CD8-positive, alpha-beta T cell (primary cell): ENCODE measurements at regions of chr19 and their contacts with region 1.

Region 1: DNA sequence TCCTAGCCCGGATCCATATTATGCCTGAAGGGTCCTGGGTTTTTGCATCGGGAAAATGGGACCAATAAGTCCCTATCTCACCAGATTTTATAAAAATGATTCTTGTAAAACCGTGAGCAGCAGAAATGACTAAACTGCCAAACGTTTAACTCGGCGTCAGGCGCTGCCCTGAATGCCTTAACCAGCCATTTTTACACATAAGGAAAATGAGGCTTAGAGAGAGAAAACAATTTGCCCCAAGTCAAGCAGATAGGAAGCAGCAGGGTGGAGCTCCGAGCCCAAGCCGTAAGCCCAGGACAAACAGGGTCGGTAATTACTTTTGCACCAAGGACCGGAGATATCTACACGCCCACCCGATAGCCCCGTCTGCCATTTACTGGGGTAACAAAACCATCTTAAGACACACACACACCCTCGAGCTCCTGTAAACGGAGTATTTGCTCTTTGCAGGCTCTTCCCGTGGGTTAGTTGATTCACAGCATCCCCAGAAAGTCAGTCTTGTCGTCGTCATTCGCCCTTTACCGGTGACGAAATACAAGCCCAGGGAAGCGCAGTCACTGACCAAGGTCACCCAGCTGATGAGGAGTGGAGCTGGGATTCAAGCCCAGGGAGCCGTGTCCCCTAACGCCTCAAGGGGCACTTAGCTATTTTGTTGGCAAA is 16.0 kb upstream of the MRI1 start:
- DNase-seq: peak in 2 of 9 experiments; percentile 23 to 55
- ATAC-seq: peak; percentile 8
- H3K4me3 ChIP-seq: peak overlapping the region; percentile 85 to 97
- H3K4me3 Mint-ChIP-seq: peak overlapping the region; percentile 90
- H3K27ac ChIP-seq: peak overlapping the region; percentile 96 to 98
- H3K27ac Mint-ChIP-seq: peak overlapping the region; percentile 92
- H3K4me1 ChIP-seq: peaks cover 22% of the 10 kb centered on the region
- H3K4me1 Mint-ChIP-seq: peaks cover 23% of the 10 kb centered on the region
- H3K27me3 ChIP-seq: no peaks in the 10 kb centered on the region
- H3K27me3 Mint-ChIP-seq: no peaks in the 10 kb centered on the region
- CTCF ChIP-seq: no peak

Region 2: DNA sequence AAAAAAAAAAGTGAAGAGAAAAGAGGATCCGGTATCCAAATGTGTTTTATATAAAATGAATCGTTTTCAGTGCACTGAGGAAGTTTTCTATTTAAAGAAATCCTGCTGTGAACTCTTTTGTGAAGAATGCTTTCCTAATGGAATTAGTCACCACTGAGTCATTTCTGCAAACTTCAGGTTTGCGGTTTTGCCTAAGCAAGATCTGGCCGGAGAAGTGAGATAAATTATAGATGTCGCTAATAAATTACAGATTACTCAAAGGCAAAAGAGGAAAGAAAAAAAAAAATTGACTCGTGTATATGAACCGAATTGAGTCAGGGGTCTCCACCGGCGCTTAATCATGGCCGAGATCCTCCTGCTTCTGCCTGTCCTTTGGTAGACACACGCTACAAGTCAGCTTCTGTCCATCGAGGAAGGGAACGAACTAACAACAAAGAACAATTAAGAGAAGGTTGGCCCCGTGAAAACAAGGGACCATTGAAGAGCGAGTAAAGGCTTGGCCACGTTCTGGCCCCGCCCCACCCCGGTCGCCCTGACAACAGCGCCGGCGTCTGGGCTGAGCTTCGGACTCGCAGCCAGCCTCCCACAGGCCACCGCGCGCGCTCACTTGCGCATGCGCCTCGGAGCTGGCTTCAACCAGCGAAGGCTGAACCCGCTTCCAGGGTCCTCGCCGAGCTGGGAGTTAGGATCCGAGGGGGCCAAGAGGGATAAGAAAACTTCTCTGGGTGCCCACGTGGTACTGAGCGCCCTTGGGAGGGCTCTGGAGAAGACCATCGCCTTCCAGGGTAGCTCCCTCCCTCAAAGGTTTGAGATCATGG is 16.9 kb before region 1 on chr19:
- CTCF ChIA-PET with region 1: no interaction called
- POLR2A ChIA-PET with region 1: interaction called, 14 read pairs
- intact Hi-C with region 1: loop called (anchors 1 kb)
- DNase-seq: peak; percentile 87 to 97 (median 93)
- ATAC-seq: peak; percentile 100
- H3K4me3 ChIP-seq: peak overlapping the region; percentile 59 to 87
- H3K4me3 Mint-ChIP-seq: peak overlapping the region; percentile 90
- H3K27ac ChIP-seq: peak overlapping the region; percentile 57 to 59
- H3K27ac Mint-ChIP-seq: peak overlapping the region; percentile 74
- H3K4me1 ChIP-seq: peaks cover 7% of the 10 kb centered on the region
- H3K4me1 Mint-ChIP-seq: peaks cover 8% of the 10 kb centered on the region
- H3K27me3 ChIP-seq: no peaks in the 10 kb centered on the region
- H3K27me3 Mint-ChIP-seq: no peaks in the 10 kb centered on the region
- CTCF ChIP-seq: no peak

Region 3: DNA sequence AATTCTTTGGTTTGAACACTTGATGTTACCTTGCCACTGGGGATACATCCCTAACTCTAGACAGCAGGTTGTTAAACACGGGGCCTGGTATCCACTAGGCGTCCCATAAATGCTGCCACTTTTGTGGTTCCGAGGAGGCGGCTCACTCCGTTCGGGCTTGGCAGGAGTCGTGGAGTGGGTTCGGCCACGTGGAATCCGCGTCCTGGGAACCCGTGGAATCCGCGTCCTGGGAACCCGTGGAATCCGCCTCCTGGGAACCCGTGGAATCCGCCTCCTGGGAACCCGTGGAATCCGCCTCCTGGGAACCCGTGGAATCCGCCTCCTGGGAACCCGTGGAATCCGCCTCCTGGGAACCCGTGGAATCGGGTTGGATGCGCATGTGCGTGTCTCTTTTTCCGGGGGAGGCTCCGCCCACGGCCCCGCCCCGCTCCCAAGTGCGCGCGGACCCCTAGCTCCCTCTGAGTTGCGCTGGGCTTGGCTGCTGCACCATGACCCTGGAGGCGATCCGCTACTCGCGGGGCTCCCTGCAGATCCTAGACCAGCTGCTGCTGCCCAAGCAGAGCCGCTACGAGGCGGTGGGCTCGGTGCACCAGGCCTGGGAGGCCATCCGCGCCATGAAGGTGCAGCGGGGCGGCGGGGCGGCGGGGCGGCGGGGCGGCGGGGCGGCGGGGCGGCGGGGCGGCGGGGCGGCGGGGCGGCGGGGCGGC is 16.0 kb after region 1 on chr19 and contains the start of gene MRI1:
- CTCF ChIA-PET with region 1: interaction called, 4 read pairs
- POLR2A ChIA-PET with region 1: interaction called, 8 read pairs
- intact Hi-C with region 1: loop called (anchors 1 kb)
- DNase-seq: peak in 8 of 9 experiments; percentile 36 to 81 (median 68)
- ATAC-seq: peak; percentile 88
- H3K4me3 ChIP-seq: peak within 1 kb of the TSS; percentile 64 to 75
- H3K4me3 Mint-ChIP-seq: peak within 1 kb of the TSS; percentile 89
- H3K27ac ChIP-seq: peak within 1 kb of the TSS; percentile 69 to 76
- H3K27ac Mint-ChIP-seq: peak within 1 kb of the TSS; percentile 84
- H3K4me1 ChIP-seq: peaks cover 15% of the 10 kb centered on the region
- H3K4me1 Mint-ChIP-seq: peaks cover 17% of the 10 kb centered on the region
- H3K27me3 ChIP-seq: no peaks in the 10 kb centered on the region
- H3K27me3 Mint-ChIP-seq: no peaks in the 10 kb centered on the region
- CTCF ChIP-seq: no peak
- total RNA-seq, gene MRI1: 14.3 to 14.8 TPM

Region 4: GRCh38 chr19:13774217-13775191 is 26.2 kb after region 1 on chr19 and contains the start of gene C19orf53:
- CTCF ChIA-PET with region 1: no interaction called
- POLR2A ChIA-PET with region 1: interaction called, 16 read pairs
- intact Hi-C with region 1: loop called (anchors 1 kb)
- DNase-seq: peak; percentile 66 to 94 (median 87)
- ATAC-seq: peak; percentile 96
- H3K4me3 ChIP-seq: peak within 1 kb of the TSS; percentile 89 to 91
- H3K4me3 Mint-ChIP-seq: peak within 1 kb of the TSS; percentile 99
- H3K27ac ChIP-seq: peak within 1 kb of the TSS; percentile 83 to 85
- H3K27ac Mint-ChIP-seq: peak within 1 kb of the TSS; percentile 97
- H3K4me1 ChIP-seq: peaks cover 17% of the 10 kb centered on the region
- H3K4me1 Mint-ChIP-seq: peaks cover 25% of the 10 kb centered on the region
- H3K27me3 ChIP-seq: no peaks in the 10 kb centered on the region
- H3K27me3 Mint-ChIP-seq: no peaks in the 10 kb centered on the region
- CTCF ChIP-seq: no peak
- total RNA-seq, gene C19orf53: 116 TPM

Region 5: DNA sequence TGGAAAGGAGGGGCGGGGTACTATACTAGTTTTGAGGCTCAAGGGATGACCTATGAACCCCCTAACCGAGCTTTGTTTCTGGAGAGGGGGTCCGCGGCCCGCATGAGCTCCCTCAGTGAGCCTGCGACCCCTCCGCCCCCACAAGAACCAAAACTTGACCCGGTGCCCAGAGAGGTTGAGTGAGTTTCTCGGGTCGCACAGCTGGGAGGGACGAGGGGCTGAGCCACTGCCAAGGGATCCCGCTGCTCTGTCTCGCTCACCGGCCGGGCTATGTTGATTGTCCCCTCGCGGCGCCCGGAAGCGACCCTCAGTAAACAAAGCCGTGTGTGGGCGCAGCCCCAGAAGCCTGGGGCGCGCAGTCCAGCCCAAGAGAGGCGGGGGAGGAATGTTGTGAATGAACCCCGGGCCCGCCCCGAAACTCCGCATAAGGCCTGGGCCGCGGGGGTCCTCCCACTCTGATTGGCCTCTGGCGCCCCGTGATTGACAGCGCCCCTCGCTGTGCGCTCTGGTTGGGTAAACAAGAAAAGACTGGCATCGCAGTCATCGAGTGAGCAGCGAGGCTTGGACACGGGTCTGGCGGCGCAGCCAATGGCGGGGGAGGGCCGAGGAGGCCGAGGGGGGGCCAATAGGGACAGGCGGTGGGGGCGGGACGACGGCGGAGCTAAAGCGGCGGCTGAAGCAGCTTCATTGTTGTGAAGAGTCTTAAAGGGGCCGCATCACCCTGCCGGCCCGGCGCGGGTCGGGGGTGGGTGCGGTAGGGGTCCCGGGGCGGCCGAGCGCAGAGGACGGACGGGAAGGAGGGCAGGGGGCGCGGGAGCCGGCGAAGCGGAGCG is 46.7 kb after region 1 on chr19 and contains the start of gene ZSWIM4:
- CTCF ChIA-PET with region 1: no interaction called
- POLR2A ChIA-PET with region 1: interaction called, 5 read pairs
- intact Hi-C with region 1: loop called in 1 of 2 experiments (anchors 1 kb)
- DNase-seq: peak; percentile 83 to 96 (median 91)
- ATAC-seq: peak; percentile 85
- H3K4me3 ChIP-seq: peak within 1 kb of the TSS; percentile 73 to 80
- H3K4me3 Mint-ChIP-seq: peak within 1 kb of the TSS; percentile 92
- H3K27ac ChIP-seq: peak within 1 kb of the TSS; percentile 51 to 77
- H3K27ac Mint-ChIP-seq: peak within 1 kb of the TSS; percentile 89
- H3K4me1 ChIP-seq: peaks cover 27% of the 10 kb centered on the region
- H3K4me1 Mint-ChIP-seq: peaks cover 38% of the 10 kb centered on the region
- H3K27me3 ChIP-seq: no peaks in the 10 kb centered on the region
- H3K27me3 Mint-ChIP-seq: no peaks in the 10 kb centered on the region
- CTCF ChIP-seq: no peak
- total RNA-seq, gene ZSWIM4: 4.1 to 5.0 TPM

Region 6: DNA sequence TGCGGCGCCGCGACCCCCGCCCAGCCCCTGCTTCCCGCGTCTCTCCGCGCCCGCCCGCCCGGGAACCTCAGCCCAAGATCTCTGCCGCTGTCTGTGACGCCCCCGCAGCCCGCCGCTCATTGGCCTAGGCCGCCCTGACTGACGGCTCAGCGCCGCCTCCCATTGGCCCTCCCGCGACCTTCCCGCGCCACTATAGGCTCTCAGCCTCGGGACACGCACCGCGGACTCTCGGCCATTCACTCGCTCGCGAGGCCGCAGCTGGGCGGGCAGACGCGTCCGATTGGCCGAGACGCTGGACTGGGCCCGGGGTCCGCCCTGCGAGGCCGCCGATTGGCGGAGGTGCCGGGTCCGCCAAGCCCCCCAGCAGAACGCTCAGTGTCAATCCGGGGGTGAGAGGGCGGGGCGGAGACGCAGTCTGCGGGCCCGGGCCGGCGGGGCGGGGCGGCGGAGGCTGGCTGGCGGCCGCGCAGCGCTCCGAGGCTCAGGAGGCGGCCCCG is 369.4 kb after region 1 on chr19 and contains the start of gene PRKACA:
- CTCF ChIA-PET with region 1: no interaction called
- POLR2A ChIA-PET with region 1: no interaction called
- intact Hi-C with region 1: loop called in 1 of 2 experiments (anchors 5 kb)
- DNase-seq: peak; percentile 95 to 99 (median 98)
- ATAC-seq: peak; percentile 90
- H3K4me3 ChIP-seq: peak within 1 kb of the TSS; percentile 67 to 72
- H3K4me3 Mint-ChIP-seq: peak within 1 kb of the TSS; percentile 94
- H3K27ac ChIP-seq: peak within 1 kb of the TSS; percentile 52 to 86
- H3K27ac Mint-ChIP-seq: peak within 1 kb of the TSS; percentile 99
- H3K4me1 ChIP-seq: peaks cover 42% of the 10 kb centered on the region
- H3K4me1 Mint-ChIP-seq: peaks cover 41% of the 10 kb centered on the region
- H3K27me3 ChIP-seq: no peaks in the 10 kb centered on the region
- H3K27me3 Mint-ChIP-seq: no peaks in the 10 kb centered on the region
- CTCF ChIP-seq: no peak
- total RNA-seq, gene PRKACA: 37.0 to 40.8 TPM